Activated T-helper 2 cell treated with anti-CD3 and anti-CD28 coated beads, Interferon-gamma antibody, Interleukin-2, Interleukin-4, amounts not matched to agents 10 μg/mL and 5 μg/mL and 100 μg/mL, durations not matched to agents 14 hours and 24 hours and 36 hours (primary cell): ENCODE measurements at regions of chr12 and their contacts with region 1.

Region 1: DNA sequence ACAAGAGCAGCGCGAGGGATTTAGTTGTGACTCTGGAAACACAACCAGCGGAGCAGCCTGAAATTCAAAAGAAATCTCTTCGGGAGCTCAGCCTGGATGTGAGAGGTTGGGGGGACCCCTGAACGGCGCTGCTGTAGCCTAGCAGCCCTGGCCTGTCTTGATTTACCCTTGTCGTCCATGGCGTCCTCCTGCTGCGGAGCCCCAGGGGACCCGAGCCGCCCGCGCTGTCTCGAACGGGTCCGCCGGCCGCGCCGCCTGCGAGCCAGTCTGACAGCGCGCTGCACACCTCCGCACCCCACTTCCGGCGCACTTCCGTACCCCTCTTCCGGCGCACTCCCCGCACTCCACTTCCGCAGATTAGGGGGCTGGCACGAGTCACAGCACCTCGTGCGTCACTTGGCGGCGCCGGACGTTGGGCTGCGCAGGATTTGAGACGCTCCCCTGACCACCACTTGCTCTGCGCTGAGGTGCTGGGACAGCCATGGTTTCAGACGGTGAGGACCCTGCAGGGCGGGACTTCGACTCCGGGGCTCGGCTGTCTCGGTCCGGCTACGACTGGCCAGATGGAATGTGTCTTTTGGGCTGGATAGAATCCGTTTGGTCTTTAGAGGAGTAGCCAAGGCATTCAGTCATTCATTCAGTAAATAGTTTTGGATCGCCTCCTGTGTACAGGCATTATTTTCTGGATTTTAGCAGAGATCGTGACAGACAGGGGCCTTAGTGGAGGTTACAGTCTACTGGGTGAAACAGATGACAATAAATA is at the starts of genes EIF2B1 and GTF2H3:
- DNase-seq: peak; percentile 96
- H3K4me3 Mint-ChIP-seq: peak within 1 kb of the TSS; percentile 95
- H3K27ac Mint-ChIP-seq: peak within 1 kb of the TSS; percentile 95
- H3K4me1 Mint-ChIP-seq: peaks cover 16% of the 10 kb centered on the region
- H3K27me3 Mint-ChIP-seq: no peaks in the 10 kb centered on the region
- total RNA-seq, gene EIF2B1: 65.8 and 66.0 TPM in 2 replicates
- total RNA-seq, gene GTF2H3: 53.2 and 65.4 TPM in 2 replicates

Region 2: GRCh38 chr12:123972457-123973401 is 339.2 kb after region 1 on chr12 and contains the starts of genes CCDC92 and ZNF664:
- intact Hi-C with region 1: loop called (anchors 5 kb)
- DNase-seq: peak; percentile 91
- H3K4me3 Mint-ChIP-seq: peak within 1 kb of the TSS; percentile 96
- H3K27ac Mint-ChIP-seq: peak within 1 kb of the TSS; percentile 74
- H3K4me1 Mint-ChIP-seq: peaks cover 29% of the 10 kb centered on the region
- H3K27me3 Mint-ChIP-seq: peaks cover 2% of the 10 kb centered on the region
- total RNA-seq, gene CCDC92: 11.8 and 12.8 TPM in 2 replicates
- total RNA-seq, gene ZNF664: 63.3 and 66.2 TPM in 2 replicates